PC-9 (cell line): ENCODE measurements at regions of chr10 and their contacts with region 1.

Region 1: DNA sequence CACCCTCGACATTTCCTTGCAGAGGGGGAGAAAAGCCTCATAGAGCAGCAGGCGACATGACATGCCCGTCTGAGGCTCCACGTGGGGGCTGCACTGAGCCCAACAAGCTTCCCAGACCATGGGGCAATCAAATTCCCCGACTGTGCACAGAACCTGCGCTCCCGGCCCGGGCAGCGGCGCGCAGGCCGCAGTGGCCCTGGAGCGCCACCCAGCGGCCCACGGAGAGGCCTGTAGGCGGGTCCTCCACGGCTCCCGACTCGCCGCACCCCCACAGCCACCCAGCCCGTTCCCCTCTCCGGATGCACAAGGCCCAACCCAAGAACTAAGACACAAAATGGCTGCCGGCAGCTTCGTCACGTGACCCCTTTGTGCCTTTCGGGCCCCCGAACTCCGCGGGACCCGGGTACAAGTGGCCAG is 816 bp downstream of the EPC1 start:
- DNase-seq: peak; percentile 78 to 95
- H3K4me3 ChIP-seq: peak overlapping the region; percentile 96
- H3K27ac ChIP-seq: peak overlapping the region; percentile 100
- H3K4me1 ChIP-seq: peaks cover 26% of the 10 kb centered on the region
- H3K27me3 ChIP-seq: no peaks in the 10 kb centered on the region
- CTCF ChIP-seq: peak; percentile 84

Region 2: DNA sequence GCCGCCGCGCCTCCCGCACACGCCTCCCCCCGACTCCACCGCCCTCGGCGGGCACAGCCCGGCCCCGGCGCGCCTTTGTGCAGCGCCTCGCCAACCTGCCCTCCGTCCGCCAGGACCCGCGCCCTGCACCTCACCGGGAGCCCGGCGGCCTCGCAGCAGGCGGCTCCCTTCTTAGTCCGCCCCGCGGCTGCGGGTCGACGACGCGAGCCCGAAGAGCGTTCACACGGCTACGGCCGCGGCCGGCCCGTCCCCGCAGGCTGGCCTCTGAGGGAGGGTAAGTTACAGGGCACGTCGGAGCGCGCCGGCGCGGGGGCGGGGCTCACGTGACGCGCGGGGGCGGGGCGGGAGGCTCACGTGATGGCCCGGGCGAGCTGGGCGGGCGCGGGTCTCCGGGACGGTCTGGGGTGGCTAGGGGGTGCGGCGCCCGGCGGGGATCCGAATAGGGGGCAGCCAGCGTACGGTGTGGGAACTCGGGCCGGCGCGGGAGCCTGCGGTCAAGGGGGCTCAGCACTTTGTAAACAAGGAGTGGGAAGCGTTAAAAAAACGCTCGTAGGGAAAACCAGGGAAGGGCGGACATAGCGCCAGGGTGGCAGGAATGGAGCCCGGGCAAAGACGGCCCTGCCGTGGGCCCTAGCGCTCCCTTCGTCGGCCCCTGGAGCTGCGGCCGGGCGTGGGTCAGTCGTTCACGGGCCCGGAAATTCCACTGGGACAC is 417.4 kb before region 1 on chr10 and contains the start of gene ARHGAP12:
- CTCF ChIA-PET with region 1: no interaction called
- POLR2A ChIA-PET with region 1: no interaction called
- intact Hi-C with region 1: loop called (anchors 10 kb)
- DNase-seq: peak; percentile 51 to 91
- H3K4me3 ChIP-seq: peak within 1 kb of the TSS; percentile 77
- H3K27ac ChIP-seq: peak within 1 kb of the TSS; percentile 69
- H3K4me1 ChIP-seq: peaks cover 49% of the 10 kb centered on the region
- H3K27me3 ChIP-seq: no peaks in the 10 kb centered on the region
- CTCF ChIP-seq: no peak
- total RNA-seq, gene ARHGAP12: 34.3 and 51.9 TPM in 2 replicates

Region 3: GRCh38 chr10:32139223-32140073 is 206.7 kb before region 1 on chr10:
- CTCF ChIA-PET with region 1: no interaction called
- POLR2A ChIA-PET with region 1: no interaction called
- intact Hi-C with region 1: loop called (anchors 1 kb)
- DNase-seq: peak; percentile 86
- H3K4me3 ChIP-seq: no peak overlapping the region
- H3K27ac ChIP-seq: peak overlapping the region; percentile 55
- H3K4me1 ChIP-seq: peaks cover 14% of the 10 kb centered on the region
- H3K27me3 ChIP-seq: no peaks in the 10 kb centered on the region
- CTCF ChIP-seq: no peak

Region 4: DNA sequence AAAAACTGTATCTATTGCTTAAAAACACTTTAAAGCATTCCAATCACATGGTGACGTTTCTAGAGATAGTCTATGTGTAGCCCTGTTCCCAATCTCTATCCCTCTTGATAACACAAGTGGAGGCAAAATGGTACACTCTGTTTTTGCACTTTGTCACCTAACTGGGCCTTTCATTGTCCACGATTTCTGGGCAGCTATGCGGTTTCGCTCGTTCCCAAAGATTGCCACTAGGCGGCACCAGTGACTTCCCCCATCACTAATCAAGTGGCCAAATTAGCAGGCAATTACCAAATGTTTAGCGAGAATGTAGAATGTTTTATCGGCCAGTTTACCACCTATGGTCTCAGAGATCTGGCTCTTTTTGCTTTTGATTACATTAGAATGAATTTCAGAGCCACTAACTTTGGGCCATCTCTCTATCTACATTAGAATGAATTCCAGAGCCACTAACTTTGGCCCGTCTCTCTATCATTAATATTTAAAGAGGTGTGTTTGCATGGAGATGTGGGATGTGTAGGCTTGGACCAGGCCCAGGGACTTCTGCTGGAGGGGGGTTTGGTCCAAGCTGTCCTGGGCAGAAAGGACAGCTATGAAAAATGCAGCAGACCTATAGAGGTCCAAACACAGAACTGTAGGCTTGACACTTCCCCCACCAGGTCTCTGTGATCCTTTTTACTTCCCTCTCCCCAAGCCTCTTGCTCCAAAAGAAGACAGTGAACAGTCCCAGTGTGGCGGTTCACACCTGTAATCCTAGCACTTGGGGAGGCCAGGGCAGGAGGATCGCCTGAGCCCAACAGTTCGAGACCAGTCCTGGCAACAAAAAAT is 89.3 kb before region 1 on chr10:
- CTCF ChIA-PET with region 1: no interaction called
- POLR2A ChIA-PET with region 1: no interaction called
- intact Hi-C with region 1: loop called (anchors 10 kb)
- DNase-seq: peak in 1 of 2 experiments; percentile 47
- H3K4me3 ChIP-seq: no peak overlapping the region
- H3K27ac ChIP-seq: no peak overlapping the region
- H3K4me1 ChIP-seq: peaks cover 19% of the 10 kb centered on the region
- H3K27me3 ChIP-seq: no peaks in the 10 kb centered on the region
- CTCF ChIP-seq: peak; percentile 71

Region 5: GRCh38 chr10:32318476-32318896 is 27.7 kb before region 1 on chr10:
- CTCF ChIA-PET with region 1: no interaction called
- POLR2A ChIA-PET with region 1: no interaction called
- intact Hi-C with region 1: no loop called
- DNase-seq: no peak
- H3K4me3 ChIP-seq: no peak overlapping the region
- H3K27ac ChIP-seq: no peak overlapping the region
- H3K4me1 ChIP-seq: no peaks in the 10 kb centered on the region
- H3K27me3 ChIP-seq: no peaks in the 10 kb centered on the region
- CTCF ChIP-seq: no peak

Region 6: GRCh38 chr10:32360243-32360642 is 14.1 kb after region 1 on chr10:
- CTCF ChIA-PET with region 1: no interaction called
- POLR2A ChIA-PET with region 1: no interaction called
- intact Hi-C with region 1: no loop called
- DNase-seq: no peak
- H3K4me3 ChIP-seq: no peak overlapping the region
- H3K27ac ChIP-seq: no peak overlapping the region
- H3K4me1 ChIP-seq: no peaks in the 10 kb centered on the region
- H3K27me3 ChIP-seq: no peaks in the 10 kb centered on the region
- CTCF ChIP-seq: no peak

Region 7: DNA sequence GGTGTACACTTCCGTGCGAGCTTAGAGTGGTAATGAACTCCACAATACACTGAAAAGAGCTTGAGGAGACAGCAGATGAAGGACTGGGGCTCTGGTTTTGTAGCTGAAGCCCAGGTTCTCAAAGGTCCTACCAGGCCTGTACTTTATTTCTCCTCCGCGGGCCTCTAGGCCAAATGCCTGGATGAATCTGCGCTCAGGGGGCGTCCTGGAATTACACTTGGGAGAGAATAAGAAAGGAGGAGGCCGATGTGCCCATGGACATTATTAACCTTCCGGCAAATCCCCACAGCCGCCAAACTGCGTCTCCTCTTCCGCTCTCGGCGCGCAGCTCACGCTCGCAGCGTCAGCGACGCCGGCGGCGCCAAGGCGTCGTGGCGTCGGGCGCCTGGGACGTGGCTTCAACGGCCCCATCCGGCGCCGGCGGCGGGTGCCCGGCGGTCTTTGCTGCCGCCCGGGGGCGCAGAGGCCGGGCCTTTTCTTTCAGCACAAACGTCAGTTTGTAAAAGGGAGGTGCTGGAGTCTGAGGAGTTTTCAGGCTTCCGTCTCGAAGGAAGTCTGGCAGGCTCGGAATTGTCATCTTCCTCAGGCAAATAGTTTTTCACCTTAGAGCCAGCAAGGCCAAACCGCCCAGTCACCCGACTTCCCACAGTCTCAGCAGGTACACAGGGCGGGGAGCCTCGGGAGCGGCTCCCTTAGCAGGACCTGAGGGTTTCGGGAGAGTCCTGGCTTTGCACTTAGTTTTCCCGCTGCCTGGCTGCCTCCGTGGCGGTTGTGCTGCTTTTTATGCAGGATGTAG is 99.8 kb after region 1 on chr10 and contains the start of gene CCDC7:
- CTCF ChIA-PET with region 1: no interaction called
- POLR2A ChIA-PET with region 1: no interaction called
- intact Hi-C with region 1: loop called (anchors 2 kb)
- DNase-seq: peak; percentile 70 to 84
- H3K4me3 ChIP-seq: peak within 1 kb of the TSS; percentile 91
- H3K27ac ChIP-seq: peak within 1 kb of the TSS; percentile 78
- H3K4me1 ChIP-seq: peaks cover 7% of the 10 kb centered on the region; the same call in 1 of the 2 replicates
- H3K27me3 ChIP-seq: no peaks in the 10 kb centered on the region
- CTCF ChIP-seq: peak; percentile 30; the same call in 1 of the 2 replicates
- total RNA-seq, gene CCDC7: 5.2 and 6.9 TPM in 2 replicates